Dendritic cell treated with granulocyte-macrophage colony-stimulating factor and Interleukin-4, amounts not matched to agents 40 ng/mL and 50 ng/mL, for 4 days (primary cell): ENCODE measurements at regions of chr14 and their contacts with region 1.

Region 1: GRCh38 chr14:76352639-76353281 is 23.2 kb upstream of the ESRRB start:
- H3K4me3 Mint-ChIP-seq: peak overlapping the region; percentile 59
- H3K27ac Mint-ChIP-seq: no peak overlapping the region
- H3K4me1 Mint-ChIP-seq: peaks cover 5% of the 10 kb centered on the region
- H3K27me3 Mint-ChIP-seq: peaks cover 32% of the 10 kb centered on the region

Region 2: DNA sequence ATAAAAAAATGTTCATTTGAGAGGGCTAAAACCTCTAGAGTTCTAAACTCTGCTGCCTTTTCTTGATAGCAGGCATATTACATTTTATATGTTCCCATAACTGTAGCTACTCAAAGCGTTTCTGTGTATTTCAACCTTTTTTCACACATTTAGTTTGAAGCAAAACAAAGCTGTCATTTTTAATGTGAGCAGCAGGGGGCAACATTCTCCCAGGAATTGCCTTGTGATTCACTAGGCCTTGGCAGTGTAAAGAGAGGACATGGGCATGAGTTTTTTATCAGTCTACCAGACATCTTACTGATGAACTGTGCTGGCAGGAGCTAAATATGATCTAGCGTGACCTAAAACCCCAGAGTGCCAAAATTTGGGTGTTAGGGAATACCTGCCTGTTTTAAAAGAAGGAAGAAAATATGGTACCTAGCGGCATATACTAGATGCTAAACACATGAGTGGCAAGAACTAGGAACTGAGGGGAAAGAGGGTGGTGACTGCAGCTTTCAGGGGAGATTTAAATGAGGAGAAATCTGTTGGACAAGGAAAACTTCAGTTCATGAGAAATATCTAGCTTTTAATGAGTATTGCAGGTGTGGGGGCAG is 301.9 kb before region 1 on chr14:
- intact Hi-C with region 1: loop called (anchors 1 kb)
- H3K4me3 Mint-ChIP-seq: no peak overlapping the region
- H3K27ac Mint-ChIP-seq: no peak overlapping the region
- H3K4me1 Mint-ChIP-seq: peaks cover 16% of the 10 kb centered on the region
- H3K27me3 Mint-ChIP-seq: no peaks in the 10 kb centered on the region

Region 3: GRCh38 chr14:76133083-76133498 is 219.7 kb before region 1 on chr14:
- intact Hi-C with region 1: no loop called
- H3K4me3 Mint-ChIP-seq: no peak overlapping the region
- H3K27ac Mint-ChIP-seq: no peak overlapping the region
- H3K4me1 Mint-ChIP-seq: no peaks in the 10 kb centered on the region
- H3K27me3 Mint-ChIP-seq: peaks cover 80% of the 10 kb centered on the region

Region 4: DNA sequence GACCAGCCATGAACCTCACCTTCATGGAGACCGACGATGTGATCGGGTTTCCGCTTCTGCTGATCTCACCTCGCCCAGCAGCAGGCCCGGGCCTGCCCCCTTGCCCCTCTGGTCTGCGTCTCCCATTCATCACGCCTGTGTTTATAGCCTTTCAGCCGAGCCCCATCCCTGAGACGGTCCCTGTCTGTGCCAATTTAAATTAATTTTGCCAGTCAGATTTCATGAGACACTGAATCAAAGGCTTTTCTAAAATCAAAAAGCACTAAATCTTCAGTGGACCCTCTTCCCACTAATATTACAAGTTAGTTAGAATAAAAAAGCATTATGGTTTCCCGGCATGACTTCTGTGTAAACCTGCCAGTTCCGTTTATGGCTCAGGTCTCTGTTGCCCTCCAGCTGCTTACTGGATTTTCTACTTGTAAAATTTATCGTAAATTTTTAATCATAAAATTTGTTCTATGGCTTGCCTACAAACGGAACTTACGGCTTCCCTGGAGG is 179.1 kb after region 1 on chr14:
- intact Hi-C with region 1: no loop called
- H3K4me3 Mint-ChIP-seq: no peak overlapping the region
- H3K27ac Mint-ChIP-seq: no peak overlapping the region
- H3K4me1 Mint-ChIP-seq: no peaks in the 10 kb centered on the region
- H3K27me3 Mint-ChIP-seq: peaks cover 4% of the 10 kb centered on the region